CD14-positive monocyte (primary cell): ENCODE measurements at regions of chrX and their contacts with region 1.

Region 1: DNA sequence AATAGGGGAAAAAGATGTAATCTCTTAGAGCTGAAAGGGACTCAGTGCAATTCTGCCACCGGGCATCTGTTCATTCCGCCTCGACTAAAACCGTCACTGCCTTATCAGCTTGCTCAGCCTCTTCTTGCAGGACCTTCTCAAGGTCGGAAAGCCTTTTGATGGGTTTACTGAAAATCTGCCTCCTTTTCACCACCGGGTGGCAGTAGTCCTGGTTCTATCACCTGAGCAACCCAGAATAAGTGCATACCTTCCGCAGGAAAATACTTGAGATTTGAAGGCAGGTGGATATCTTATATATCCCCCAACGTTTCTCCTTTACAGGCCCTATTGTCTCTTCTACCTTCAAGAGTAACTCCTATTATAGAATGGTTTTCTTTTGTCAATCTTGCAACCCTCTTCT is 103.4 kb upstream of the PAK3 start:
- DNase-seq: peak in 1 of 3 donors; percentile 3
- H3K4me3 ChIP-seq: no peak overlapping the region
- H3K4me3 Mint-ChIP-seq: no peak overlapping the region
- H3K27ac ChIP-seq: no peak overlapping the region
- H3K27ac Mint-ChIP-seq: no peak overlapping the region
- H3K4me1 ChIP-seq: no peaks in the 10 kb centered on the region
- H3K4me1 Mint-ChIP-seq: no peaks in the 10 kb centered on the region
- H3K27me3 ChIP-seq: peaks cover 0 to 14% of the 10 kb centered on the region in 2 donors
- H3K27me3 Mint-ChIP-seq: peaks cover 3 to 13% (median 8%) of the 10 kb centered on the region in 3 donors
- CTCF ChIP-seq: peak; percentile 28

Region 2: GRCh38 chrX:110863883-110864282 is 128.7 kb before region 1 on chrX:
- intact Hi-C with region 1: no loop called
- DNase-seq: no peak
- H3K4me3 ChIP-seq: no peak overlapping the region
- H3K4me3 Mint-ChIP-seq: no peak overlapping the region
- H3K27ac ChIP-seq: no peak overlapping the region
- H3K27ac Mint-ChIP-seq: no peak overlapping the region
- H3K4me1 ChIP-seq: no peaks in the 10 kb centered on the region
- H3K4me1 Mint-ChIP-seq: no peaks in the 10 kb centered on the region
- H3K27me3 ChIP-seq: no peaks in the 10 kb centered on the region
- H3K27me3 Mint-ChIP-seq: peaks cover 0 to 4% (median 1%) of the 10 kb centered on the region in 3 donors
- CTCF ChIP-seq: no peak

Region 3: DNA sequence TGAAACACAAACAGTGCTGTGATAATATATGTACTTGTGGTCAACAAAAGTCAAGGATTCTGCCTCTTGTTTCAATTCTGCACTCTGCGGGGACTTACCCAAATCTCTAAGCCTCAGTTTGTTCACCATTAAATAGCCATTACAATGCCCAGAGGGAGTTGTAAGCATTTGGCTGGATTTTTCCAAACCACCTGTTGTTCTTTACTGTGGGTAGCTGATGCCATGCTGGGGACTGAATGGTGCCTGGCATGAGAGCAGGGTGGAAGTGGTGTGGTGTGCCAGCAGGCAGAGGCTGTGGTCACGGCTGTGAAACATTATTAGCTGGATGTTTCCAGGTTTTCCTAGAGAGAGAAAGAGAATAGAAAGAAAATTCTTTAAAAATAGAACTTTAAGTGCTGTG is 42.6 kb after region 1 on chrX:
- intact Hi-C with region 1: no loop called
- DNase-seq: no peak
- H3K4me3 ChIP-seq: no peak overlapping the region
- H3K4me3 Mint-ChIP-seq: no peak overlapping the region
- H3K27ac ChIP-seq: no peak overlapping the region
- H3K27ac Mint-ChIP-seq: no peak overlapping the region
- H3K4me1 ChIP-seq: peaks cover 0 to under 1% of the 10 kb centered on the region in 2 donors
- H3K4me1 Mint-ChIP-seq: peaks cover 2% of the 10 kb centered on the region
- H3K27me3 ChIP-seq: peaks cover 0 to 2% of the 10 kb centered on the region in 2 donors
- H3K27me3 Mint-ChIP-seq: peaks cover 8 to 15% (median 13%) of the 10 kb centered on the region in 3 donors
- CTCF ChIP-seq: no peak

Region 4: GRCh38 chrX:111083081-111083480 is 90.5 kb after region 1 on chrX:
- intact Hi-C with region 1: no loop called
- DNase-seq: no peak
- H3K4me3 ChIP-seq: no peak overlapping the region
- H3K4me3 Mint-ChIP-seq: no peak overlapping the region
- H3K27ac ChIP-seq: no peak overlapping the region
- H3K27ac Mint-ChIP-seq: no peak overlapping the region
- H3K4me1 ChIP-seq: no peaks in the 10 kb centered on the region
- H3K4me1 Mint-ChIP-seq: no peaks in the 10 kb centered on the region
- H3K27me3 ChIP-seq: peaks cover 0 to 24% of the 10 kb centered on the region in 2 donors
- H3K27me3 Mint-ChIP-seq: peaks cover 3 to 25% (median 13%) of the 10 kb centered on the region in 3 donors
- CTCF ChIP-seq: no peak

Region 5: GRCh38 chrX:111098874-111099273 is 106.3 kb after region 1 on chrX:
- intact Hi-C with region 1: loop called in 1 of 2 experiments (anchors 10 kb)
- DNase-seq: peak; percentile 10 to 28 (median 17)
- H3K4me3 ChIP-seq: no peak overlapping the region
- H3K4me3 Mint-ChIP-seq: peak overlapping the region in 1 of 2 donors; percentile 46
- H3K27ac ChIP-seq: no peak overlapping the region
- H3K27ac Mint-ChIP-seq: no peak overlapping the region
- H3K4me1 ChIP-seq: peaks cover 6 to 13% of the 10 kb centered on the region in 2 donors
- H3K4me1 Mint-ChIP-seq: peaks cover 11% of the 10 kb centered on the region
- H3K27me3 ChIP-seq: peaks cover 27 to 35% of the 10 kb centered on the region in 2 donors
- H3K27me3 Mint-ChIP-seq: peaks cover 34 to 53% (median 47%) of the 10 kb centered on the region in 3 donors
- CTCF ChIP-seq: peak; percentile 74